H1 (cell line): ENCODE measurements at regions of chr3 and their contacts with region 1.

Region 1: DNA sequence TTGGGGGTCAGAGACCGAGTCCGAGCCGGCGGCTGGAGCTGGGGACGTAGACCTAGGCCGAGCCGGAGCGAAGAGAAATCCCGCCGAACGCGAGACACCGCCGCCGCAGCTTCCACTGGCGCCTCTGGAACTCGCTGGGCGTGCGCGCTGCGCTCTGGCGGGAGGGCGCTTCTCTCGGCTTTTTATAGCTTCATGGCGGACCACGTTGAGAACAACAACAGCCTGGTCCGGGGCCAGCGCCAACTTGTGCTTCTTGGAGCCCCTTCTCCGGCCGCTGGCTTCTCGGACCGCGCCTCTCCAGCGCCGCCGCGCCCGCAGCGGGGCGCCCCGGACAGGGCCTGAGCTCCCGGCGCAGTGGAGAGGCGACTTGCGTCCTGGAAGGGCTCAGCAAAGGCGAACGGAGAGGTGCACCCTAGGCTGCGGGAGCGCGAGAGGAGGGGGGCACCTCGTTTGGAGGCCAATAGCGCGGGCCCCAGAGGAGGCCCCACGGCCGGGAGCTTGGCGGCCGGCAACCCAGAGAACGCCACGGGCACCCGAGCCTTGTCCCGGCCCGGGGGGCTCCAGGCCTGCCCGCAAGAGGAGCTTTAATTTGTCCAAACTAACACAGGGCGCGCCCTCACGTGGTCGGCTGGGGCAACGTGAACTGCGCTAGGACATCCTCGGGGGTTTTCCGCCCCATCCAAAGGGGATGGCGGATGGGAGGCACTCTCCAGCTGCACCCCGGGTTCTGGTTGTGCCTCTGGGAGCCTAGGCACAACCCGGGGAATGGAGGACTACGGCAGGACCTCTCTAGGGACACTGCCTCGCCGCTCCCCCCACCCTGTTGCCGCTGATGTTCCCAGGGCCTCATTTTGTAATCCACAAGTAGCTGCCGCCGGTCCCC is 37.7 kb downstream of the HMCES start:
- DNase-seq: peak in 1 of 2 experiments; percentile 96
- H3K4me3 ChIP-seq: peak overlapping the region; percentile 70 to 96 (median 78)
- H3K27ac ChIP-seq: peak overlapping the region; percentile 69
- H3K4me1 ChIP-seq: peaks cover 4 to 9% (median 5%) of the 10 kb centered on the region in 4 experiments
- H3K27me3 ChIP-seq: no peaks in the 10 kb centered on the region
- CTCF ChIP-seq: peak in 2 of 3 experiments; percentile 43 to 58; a peak in 3 of 4 replicates
- EP300 ChIP-seq: peak in 1 of 2 experiments; percentile 74; a peak in 1 of 3 replicates
- POLR2A ChIP-seq: peak in 1 of 2 experiments; percentile 99; a peak in 2 of 3 replicates
- RAD21 ChIP-seq: peak; percentile 41 to 51

Region 2: GRCh38 chr3:128763967-128764366 is 552.4 kb before region 1 on chr3:
- CTCF ChIA-PET with region 1: no interaction called
- POLR2A ChIA-PET with region 1: no interaction called
- DNase-seq: no peak
- H3K4me3 ChIP-seq: no peak overlapping the region
- H3K27ac ChIP-seq: no peak overlapping the region
- H3K4me1 ChIP-seq: peaks cover 0 to 2% (median 0%) of the 10 kb centered on the region in 4 experiments; a peak in 3 of 7 replicates
- H3K27me3 ChIP-seq: no peaks in the 10 kb centered on the region
- CTCF ChIP-seq: no peak
- EP300 ChIP-seq: no peak
- POLR2A ChIP-seq: no peak
- RAD21 ChIP-seq: no peak

Region 3: DNA sequence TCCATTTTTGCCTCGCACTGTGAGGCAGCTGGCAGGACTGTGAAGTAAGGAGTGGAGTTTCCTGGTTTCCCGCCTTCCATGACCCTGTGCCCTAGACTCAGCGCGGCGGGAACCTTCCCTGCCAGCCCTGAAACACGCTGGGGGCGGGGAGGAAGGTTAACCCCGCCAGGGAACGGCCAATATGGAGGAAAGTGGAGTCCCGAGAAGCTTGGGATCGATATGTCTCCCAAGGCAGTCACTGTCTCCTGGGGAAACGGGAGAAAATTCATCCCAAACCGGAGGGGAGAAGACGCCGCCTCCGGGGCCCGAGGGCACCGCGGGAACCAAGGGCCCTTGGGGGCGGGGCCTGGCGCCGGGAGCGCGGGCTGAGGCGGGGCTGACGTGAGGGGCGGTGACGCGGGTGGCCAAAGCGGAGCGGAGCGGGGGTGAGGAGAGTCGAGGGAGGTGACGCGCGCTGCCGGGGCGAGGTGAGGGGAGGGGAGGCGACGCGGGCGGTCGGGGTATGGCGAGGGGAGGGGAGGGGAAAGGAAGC is 37.9 kb before region 1 on chr3 and contains the start of gene HMCES:
- CTCF ChIA-PET with region 1: interaction called, 13 read pairs
- POLR2A ChIA-PET with region 1: interaction called, 92 read pairs
- DNase-seq: peak; percentile 66 to 96
- H3K4me3 ChIP-seq: peak within 1 kb of the TSS; percentile 92 to 96 (median 94)
- H3K27ac ChIP-seq: peak within 1 kb of the TSS; percentile 89
- H3K4me1 ChIP-seq: peaks cover 0 to 13% (median 6%) of the 10 kb centered on the region in 4 experiments; a peak in 6 of 7 replicates
- H3K27me3 ChIP-seq: no peaks in the 10 kb centered on the region
- CTCF ChIP-seq: 0 out of 4 replicates have a peak, but pooled peaks of 1 of the 3 experiments have one; percentile 1
- EP300 ChIP-seq: no peak
- POLR2A ChIP-seq: peak in 1 of 2 experiments; percentile 45; a peak in 2 of 3 replicates
- RAD21 ChIP-seq: no peak
- total RNA-seq, gene HMCES: 46.7 and 49.5 TPM in 2 replicates

Region 4: DNA sequence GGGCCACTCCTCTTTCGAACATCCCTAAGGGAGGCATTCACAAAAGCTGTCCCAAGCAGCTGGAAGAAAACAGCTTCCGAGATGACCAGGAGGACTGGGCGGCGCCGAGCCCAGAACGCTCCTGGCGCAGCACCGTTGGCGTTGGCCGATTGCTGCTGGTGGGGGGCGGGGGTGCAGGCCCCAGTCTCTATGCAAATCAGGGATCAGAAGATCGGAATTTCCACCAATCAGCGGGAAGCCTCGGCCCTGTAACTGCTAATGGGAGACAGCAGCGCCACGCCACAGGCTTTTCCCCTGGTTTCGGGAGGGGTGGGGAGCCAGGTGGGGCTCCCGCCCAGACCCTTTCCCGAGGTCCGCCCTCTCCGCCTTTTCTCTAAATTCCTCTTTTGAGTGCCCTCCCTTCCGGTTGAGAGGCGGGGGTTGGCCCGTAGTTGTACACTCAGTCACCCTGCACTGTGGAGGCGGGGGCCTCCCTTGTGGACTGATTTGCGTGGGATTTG is 10.7 kb before region 1 on chr3:
- CTCF ChIA-PET with region 1: interaction called, 28 read pairs
- POLR2A ChIA-PET with region 1: interaction called, 104 read pairs
- DNase-seq: peak; percentile 96 to 97
- H3K4me3 ChIP-seq: peak overlapping the region in 2 of 4 experiments; percentile 7 to 48; a peak in 3 of 8 replicates
- H3K27ac ChIP-seq: peak overlapping the region; percentile 56; the same call in 1 of the 2 replicates
- H3K4me1 ChIP-seq: peaks cover 3 to 8% (median 5%) of the 10 kb centered on the region in 4 experiments
- H3K27me3 ChIP-seq: no peaks in the 10 kb centered on the region
- CTCF ChIP-seq: no peak
- EP300 ChIP-seq: peak in 1 of 2 experiments; percentile 86; a peak in 1 of 3 replicates
- POLR2A ChIP-seq: peak; percentile 63 to 78
- RAD21 ChIP-seq: peak in 1 of 2 experiments; percentile 6; a peak in 1 of 4 replicates

Region 5: GRCh38 chr3:129336093-129336709 is 19.8 kb after region 1 on chr3:
- CTCF ChIA-PET with region 1: interaction called, 73 read pairs
- POLR2A ChIA-PET with region 1: interaction called, 112 read pairs
- DNase-seq: no peak
- H3K4me3 ChIP-seq: no peak overlapping the region
- H3K27ac ChIP-seq: no peak overlapping the region
- H3K4me1 ChIP-seq: no peaks in the 10 kb centered on the region
- H3K27me3 ChIP-seq: peaks cover 0 to 1% (median 0%) of the 10 kb centered on the region in 4 experiments; a peak in 1 of 7 replicates
- CTCF ChIP-seq: no peak
- EP300 ChIP-seq: no peak
- POLR2A ChIP-seq: no peak
- RAD21 ChIP-seq: no peak

Region 6: GRCh38 chr3:129352045-129352444 is 35.7 kb after region 1 on chr3:
- CTCF ChIA-PET with region 1: interaction called, 5 read pairs
- POLR2A ChIA-PET with region 1: interaction called, 24 read pairs
- DNase-seq: peak in 1 of 2 experiments; percentile 62
- H3K4me3 ChIP-seq: no peak overlapping the region
- H3K27ac ChIP-seq: no peak overlapping the region
- H3K4me1 ChIP-seq: peaks cover 0 to 7% (median 1%) of the 10 kb centered on the region in 4 experiments; a peak in 3 of 7 replicates
- H3K27me3 ChIP-seq: no peaks in the 10 kb centered on the region
- CTCF ChIP-seq: peak; percentile 43 to 67 (median 59)
- EP300 ChIP-seq: no peak
- POLR2A ChIP-seq: no peak
- RAD21 ChIP-seq: peak in 1 of 2 experiments; percentile 33; a peak in 2 of 4 replicates

Region 7: GRCh38 chr3:129383292-129383860 is 67.0 kb after region 1 on chr3:
- CTCF ChIA-PET with region 1: interaction called, 6 read pairs
- POLR2A ChIA-PET with region 1: interaction called, 12 read pairs
- DNase-seq: peak; percentile 39 to 75
- H3K4me3 ChIP-seq: no peak overlapping the region
- H3K27ac ChIP-seq: no peak overlapping the region
- H3K4me1 ChIP-seq: no peaks in the 10 kb centered on the region; a peak in 2 of 7 replicates
- H3K27me3 ChIP-seq: no peaks in the 10 kb centered on the region
- CTCF ChIP-seq: peak; percentile 81 to 93 (median 93)
- EP300 ChIP-seq: no peak
- POLR2A ChIP-seq: no peak
- RAD21 ChIP-seq: peak; percentile 87 to 92